MCF 10A (cell line): ENCODE measurements at regions of chr17 and their contacts with region 1.

Region 1: GRCh38 chr17:75855310-75856081 is at the start of gene WBP2:
- DNase-seq: peak; percentile 100
- H3K4me3 Mint-ChIP-seq: no peak within 1 kb of the TSS
- H3K27ac Mint-ChIP-seq: no peak within 1 kb of the TSS
- H3K4me1 Mint-ChIP-seq: peaks cover 19% of the 10 kb centered on the region
- H3K27me3 Mint-ChIP-seq: no peaks in the 10 kb centered on the region
- CTCF ChIP-seq: peak; percentile 14
- total RNA-seq, gene WBP2: 55.7 and 97.9 TPM in 2 replicates

Region 2: DNA sequence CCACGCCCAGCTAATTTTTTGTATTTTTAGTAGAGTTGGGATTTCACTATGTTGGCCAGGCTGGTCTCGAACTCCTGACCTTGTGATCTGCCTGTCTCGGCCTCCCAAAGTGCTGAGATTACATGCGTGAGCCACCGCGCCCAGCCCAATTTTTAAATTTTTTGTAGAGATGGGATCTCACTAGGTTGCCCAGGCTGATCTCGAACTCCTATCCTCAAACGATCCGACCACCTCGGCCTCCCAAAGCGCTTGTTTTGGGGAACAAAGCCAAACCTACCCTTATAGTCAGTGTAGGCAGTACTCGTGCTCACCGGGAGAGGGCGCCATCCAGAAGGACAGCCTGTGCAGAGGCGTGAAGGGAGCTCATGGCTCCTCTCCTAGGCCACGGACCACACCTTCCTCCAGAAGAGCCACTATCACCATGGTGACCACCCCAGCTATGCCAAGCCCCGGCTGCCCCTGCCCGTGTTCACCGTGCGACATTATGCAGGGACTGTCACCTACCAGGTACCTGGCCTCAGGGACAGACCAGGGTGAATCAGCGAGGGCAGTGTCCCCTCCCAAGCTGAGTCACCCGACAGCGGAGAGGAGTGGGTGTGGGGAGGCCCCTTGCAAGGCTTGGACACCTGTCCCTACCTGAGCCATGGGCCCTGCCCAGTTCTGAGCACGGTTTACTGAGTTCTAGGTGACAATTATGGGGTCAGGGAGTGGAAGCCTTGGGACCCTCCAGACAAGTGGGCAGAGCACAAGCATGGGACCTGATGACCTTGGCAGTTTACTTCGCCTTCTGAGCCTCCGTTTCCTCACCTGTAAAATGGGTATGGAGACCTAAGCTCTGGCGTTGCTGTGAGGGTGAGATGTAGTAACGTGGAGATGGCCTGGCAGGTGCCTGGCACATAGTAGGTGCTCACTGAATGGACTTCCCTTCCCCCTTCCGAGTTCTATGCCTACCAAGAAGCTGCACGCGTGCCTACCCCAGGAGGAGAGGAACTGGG is 254.1 kb before region 1 on chr17:
- CTCF ChIA-PET with region 1: no interaction called
- POLR2A ChIA-PET with region 1: no interaction called
- intact Hi-C with region 1: no loop called
- DNase-seq: peak; percentile 70
- H3K4me3 Mint-ChIP-seq: no peak overlapping the region
- H3K27ac Mint-ChIP-seq: no peak overlapping the region
- H3K4me1 Mint-ChIP-seq: peaks cover 18% of the 10 kb centered on the region
- H3K27me3 Mint-ChIP-seq: no peaks in the 10 kb centered on the region
- CTCF ChIP-seq: peak; percentile 79

Region 3: DNA sequence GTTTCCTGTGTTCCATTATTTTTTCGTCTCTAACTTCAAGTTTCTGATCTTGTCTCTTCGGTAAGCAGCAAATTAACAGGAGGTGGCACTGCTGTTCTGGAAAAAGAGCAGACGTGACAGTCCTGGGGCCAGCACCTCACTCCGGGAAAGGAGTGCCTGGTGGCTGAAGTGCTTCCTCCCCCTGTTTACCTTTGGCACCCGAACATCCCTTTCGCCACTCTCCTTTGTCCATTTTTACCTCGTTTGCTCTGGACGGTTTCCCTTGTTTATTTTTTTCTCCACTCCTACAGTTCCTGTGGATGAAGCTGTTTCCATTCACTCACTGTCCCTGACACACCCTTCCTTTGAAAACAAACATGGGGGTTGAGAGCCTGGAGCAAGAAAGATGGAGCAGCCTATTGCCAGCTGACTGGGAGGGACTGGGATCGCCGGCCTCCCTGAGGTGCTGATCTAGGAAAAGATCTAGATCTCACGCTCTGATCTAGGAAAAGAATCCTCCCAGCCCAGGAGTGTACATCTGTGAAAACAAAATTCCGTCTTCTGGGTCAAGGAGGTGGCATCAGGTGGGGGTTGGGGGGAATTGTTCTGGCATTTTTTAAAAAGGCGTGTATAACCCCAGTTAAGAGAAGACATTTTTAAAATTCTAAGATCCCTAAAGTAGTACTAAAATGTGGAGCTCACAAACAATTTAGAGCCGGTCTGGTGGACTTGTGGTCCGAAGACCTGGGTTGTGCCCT is 175.6 kb before region 1 on chr17:
- CTCF ChIA-PET with region 1: interaction called, 4 read pairs
- POLR2A ChIA-PET with region 1: interaction called, 17 read pairs
- intact Hi-C with region 1: no loop called
- DNase-seq: peak; percentile 92
- H3K4me3 Mint-ChIP-seq: peak overlapping the region; percentile 60
- H3K27ac Mint-ChIP-seq: peak overlapping the region; percentile 91
- H3K4me1 Mint-ChIP-seq: peaks cover 40% of the 10 kb centered on the region
- H3K27me3 Mint-ChIP-seq: no peaks in the 10 kb centered on the region
- CTCF ChIP-seq: peak; percentile 60

Region 4: DNA sequence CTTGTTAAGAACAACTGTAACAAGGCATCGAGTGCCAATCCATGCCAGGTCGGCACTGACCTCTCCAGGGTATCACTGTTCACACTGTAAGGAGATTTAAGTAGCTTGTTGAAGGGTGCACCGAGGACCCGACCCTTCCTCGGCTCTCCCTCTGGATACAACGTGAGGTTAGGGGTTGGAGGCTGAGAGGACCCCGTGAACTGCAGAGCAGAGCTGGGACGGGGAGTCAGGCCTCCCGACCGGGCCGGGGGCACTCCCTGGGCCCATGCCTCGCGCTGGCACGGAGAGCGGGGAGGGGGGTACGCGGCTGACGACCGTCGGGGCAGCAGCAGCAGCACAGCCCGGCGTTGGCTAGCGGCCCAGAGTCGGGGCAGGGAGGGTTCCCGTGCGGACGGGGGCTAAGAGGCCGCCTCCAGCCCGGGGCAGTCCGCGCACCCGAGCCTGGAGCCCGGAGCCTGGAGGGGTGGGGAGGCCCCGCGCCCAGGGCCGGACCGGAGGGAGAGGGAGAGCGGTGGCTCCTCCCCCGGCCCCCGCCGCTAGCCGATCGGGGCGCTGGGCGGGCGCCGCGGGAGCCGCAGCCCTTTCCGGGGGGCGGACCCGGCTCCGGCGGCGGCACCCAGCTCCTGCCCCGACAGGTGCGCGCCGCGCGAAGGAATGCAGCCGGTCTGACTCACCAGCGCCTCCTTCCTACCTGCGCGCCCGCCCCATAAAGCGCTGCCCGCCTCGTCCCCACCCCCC is 134.6 kb before region 1 on chr17 and contains the start of gene ITGB4:
- CTCF ChIA-PET with region 1: no interaction called
- POLR2A ChIA-PET with region 1: interaction called, 12 read pairs
- intact Hi-C with region 1: no loop called
- DNase-seq: peak; percentile 85
- H3K4me3 Mint-ChIP-seq: peak within 1 kb of the TSS; percentile 87
- H3K27ac Mint-ChIP-seq: peak within 1 kb of the TSS; percentile 78
- H3K4me1 Mint-ChIP-seq: peaks cover 6% of the 10 kb centered on the region
- H3K27me3 Mint-ChIP-seq: no peaks in the 10 kb centered on the region
- CTCF ChIP-seq: no peak
- total RNA-seq, gene ITGB4: 727 and 1,054 TPM in 2 replicates

Region 5: DNA sequence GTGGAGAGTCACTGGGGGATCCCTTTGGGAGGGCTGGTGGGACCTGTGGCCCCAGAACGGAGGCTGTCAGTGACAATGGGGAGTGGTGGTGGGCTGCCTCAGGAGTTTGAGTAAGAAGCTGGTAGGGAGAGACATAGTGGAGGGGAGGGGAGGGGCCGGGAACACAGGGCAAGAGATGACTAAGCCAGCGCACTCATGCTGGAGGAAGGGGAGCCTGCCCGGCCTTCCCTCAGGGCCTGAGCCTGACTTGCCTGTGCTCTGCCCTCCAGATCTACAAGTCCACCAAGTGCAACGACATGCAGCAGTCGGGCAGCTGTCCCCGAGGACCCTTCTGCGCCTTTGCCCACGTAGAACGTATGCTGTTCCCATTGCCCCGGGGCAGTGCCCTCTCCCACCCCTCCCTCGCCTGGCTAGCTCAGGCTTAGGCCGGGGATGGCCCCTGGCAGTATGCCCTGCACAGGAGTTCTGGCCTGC is 40.6 kb before region 1 on chr17:
- CTCF ChIA-PET with region 1: no interaction called
- POLR2A ChIA-PET with region 1: interaction called, 16 read pairs
- intact Hi-C with region 1: no loop called
- DNase-seq: peak; percentile 81
- H3K4me3 Mint-ChIP-seq: no peak overlapping the region
- H3K27ac Mint-ChIP-seq: peak overlapping the region; percentile 36
- H3K4me1 Mint-ChIP-seq: peaks cover 11% of the 10 kb centered on the region
- H3K27me3 Mint-ChIP-seq: no peaks in the 10 kb centered on the region
- CTCF ChIP-seq: no peak

Region 6: DNA sequence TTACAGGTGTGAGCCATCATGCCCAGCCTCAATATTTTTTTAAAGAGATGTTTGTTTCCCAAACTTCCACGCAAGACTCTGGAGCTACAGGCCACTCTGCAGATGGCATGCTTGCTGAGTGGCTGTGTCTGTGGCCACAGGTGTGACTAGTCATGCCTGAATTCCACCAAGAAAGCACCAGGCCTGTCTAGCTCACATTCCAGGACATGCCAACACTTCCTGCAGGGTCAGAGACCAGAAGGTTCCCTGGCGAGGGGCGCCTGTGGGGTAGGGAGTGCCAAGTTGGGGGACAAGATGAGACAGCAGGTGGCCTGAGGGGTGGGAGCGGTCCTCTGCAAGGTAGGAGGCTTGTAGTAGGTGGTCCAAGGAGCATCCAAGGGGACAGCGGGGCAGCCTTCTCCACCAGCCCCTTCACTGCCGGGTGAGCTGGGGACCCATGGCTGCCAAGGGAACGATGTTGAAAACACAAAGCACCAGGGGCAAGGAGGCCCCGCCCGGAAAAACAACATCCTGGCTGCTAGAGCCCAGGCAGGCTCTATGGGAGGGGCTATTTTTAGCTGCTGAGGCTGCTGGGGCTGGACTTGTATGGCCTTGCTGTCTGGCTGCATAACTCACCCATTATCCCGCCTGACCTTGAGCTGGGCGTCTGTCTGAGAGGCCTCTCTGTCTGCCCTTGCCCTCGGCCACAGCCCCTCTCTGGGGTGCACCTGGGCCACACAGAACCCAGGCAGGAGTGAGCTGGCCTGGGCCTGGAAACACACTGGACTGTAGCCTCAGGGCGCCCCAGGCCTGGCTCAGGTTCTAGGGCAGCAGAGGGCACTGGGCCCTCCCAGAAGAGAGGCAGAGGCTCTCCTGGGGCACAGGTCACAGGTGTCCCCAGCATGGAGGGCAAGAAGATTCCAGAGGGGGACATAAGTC is 17.2 kb after region 1 on chr17:
- CTCF ChIA-PET with region 1: interaction called, 36 read pairs
- POLR2A ChIA-PET with region 1: interaction called, 164 read pairs
- intact Hi-C with region 1: no loop called
- DNase-seq: peak; percentile 78
- H3K4me3 Mint-ChIP-seq: no peak overlapping the region
- H3K27ac Mint-ChIP-seq: peak overlapping the region; percentile 78
- H3K4me1 Mint-ChIP-seq: peaks cover 33% of the 10 kb centered on the region
- H3K27me3 Mint-ChIP-seq: no peaks in the 10 kb centered on the region
- CTCF ChIP-seq: no peak

Region 7: DNA sequence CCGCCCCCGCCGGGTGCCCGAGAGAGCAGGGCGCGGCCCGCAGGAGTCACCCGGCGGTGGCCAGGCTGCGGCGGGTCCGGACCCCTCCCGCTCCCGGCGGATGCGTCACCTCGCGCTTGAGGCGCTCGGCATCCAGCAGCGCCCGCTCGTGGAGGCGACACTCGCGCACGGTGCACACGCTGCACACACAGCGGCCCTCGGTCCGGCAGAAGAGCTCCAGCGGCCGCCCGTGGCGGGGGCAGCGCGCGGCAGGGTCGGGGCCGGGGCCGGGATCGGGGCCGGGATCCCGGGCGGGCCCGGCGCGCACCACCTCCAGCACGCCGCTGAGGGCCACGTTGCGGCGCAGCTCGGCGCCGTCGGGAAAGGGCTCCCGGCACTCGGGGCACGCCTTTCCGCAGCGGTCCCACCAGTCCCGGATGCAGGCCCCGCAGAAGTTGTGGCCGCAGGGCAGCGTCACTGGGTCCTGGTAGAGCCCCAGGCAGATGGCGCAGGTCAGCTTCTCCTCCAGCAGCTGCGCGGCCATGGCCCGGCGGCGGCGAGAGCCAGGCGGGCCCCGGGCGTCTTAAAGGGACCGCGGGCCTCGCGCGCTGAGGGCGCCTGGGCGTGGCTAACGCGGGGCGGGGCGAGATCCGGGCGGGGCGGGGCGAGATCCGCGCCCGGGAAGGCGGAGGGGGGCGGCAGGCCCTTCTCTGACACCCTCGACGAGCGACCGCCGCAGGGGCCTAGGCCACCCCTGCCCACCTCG is 41.1 kb after region 1 on chr17 and contains the start of gene TRIM65:
- CTCF ChIA-PET with region 1: interaction called, 3 read pairs
- POLR2A ChIA-PET with region 1: interaction called, 49 read pairs
- intact Hi-C with region 1: loop called (anchors 2 kb)
- DNase-seq: peak; percentile 71
- H3K4me3 Mint-ChIP-seq: peak within 1 kb of the TSS; percentile 74
- H3K27ac Mint-ChIP-seq: peak within 1 kb of the TSS; percentile 70
- H3K4me1 Mint-ChIP-seq: peaks cover 19% of the 10 kb centered on the region
- H3K27me3 Mint-ChIP-seq: no peaks in the 10 kb centered on the region
- CTCF ChIP-seq: peak; percentile 14
- total RNA-seq, gene TRIM65: 15.9 and 17.4 TPM in 2 replicates

Region 8: GRCh38 chr17:75987007-75987406 is 131.5 kb after region 1 on chr17:
- CTCF ChIA-PET with region 1: no interaction called
- POLR2A ChIA-PET with region 1: no interaction called
- intact Hi-C with region 1: no loop called
- DNase-seq: no peak
- H3K4me3 Mint-ChIP-seq: no peak overlapping the region
- H3K27ac Mint-ChIP-seq: no peak overlapping the region
- H3K4me1 Mint-ChIP-seq: peaks cover 7% of the 10 kb centered on the region
- H3K27me3 Mint-ChIP-seq: no peaks in the 10 kb centered on the region
- CTCF ChIP-seq: no peak

Region 9: GRCh38 chr17:76027159-76027839 is 171.8 kb after region 1 on chr17 and contains the start of gene EVPL:
- CTCF ChIA-PET with region 1: no interaction called
- POLR2A ChIA-PET with region 1: no interaction called
- intact Hi-C with region 1: no loop called
- DNase-seq: peak; percentile 91
- H3K4me3 Mint-ChIP-seq: peak within 1 kb of the TSS; percentile 80
- H3K27ac Mint-ChIP-seq: peak within 1 kb of the TSS; percentile 74
- H3K4me1 Mint-ChIP-seq: peaks cover 6% of the 10 kb centered on the region
- H3K27me3 Mint-ChIP-seq: no peaks in the 10 kb centered on the region
- CTCF ChIP-seq: no peak
- total RNA-seq, gene EVPL: 7.7 and 8.1 TPM in 2 replicates

Region 10: DNA sequence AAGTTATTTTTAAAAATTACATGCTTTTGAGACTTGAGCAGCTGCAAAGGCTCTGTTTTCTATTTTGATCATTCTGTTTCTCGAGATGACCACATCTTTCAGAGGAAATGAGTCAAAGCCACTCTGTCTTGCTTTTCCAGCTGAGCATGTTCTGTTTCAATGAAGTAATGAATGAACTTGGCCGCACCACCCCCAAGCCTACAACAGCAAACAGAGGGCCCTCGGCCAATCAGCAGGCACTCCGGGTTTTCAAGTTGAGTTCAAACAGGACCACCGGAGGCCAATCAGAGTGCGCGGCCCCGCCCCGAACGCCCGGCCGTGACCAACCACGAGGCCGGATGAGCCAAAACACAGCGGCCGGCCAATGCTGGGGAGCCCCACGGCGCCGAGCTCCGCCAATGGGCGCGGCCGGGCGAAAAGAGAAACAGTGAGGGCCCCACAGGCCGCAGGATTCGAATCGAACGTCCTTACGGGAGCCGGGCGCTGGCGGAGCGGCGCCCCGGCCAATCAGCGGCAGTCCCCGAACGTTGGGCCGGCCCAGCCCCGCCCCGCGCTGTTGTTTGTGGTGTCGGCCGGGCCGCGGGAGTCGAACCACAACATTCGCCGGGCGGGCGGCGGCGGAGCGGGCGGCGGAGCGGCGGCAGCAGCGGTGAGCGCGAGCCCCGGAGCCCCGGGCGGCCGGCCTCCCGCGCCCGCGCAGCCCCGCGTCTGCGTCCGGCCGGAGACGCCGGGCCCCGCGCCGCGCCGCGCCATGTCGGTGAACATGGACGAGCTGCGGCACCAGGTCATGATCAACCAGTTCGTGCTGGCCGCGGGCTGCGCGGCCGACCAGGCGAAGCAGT is 409.5 kb after region 1 on chr17 and contains the start of gene UBALD2:
- CTCF ChIA-PET with region 1: no interaction called
- POLR2A ChIA-PET with region 1: interaction called, 12 read pairs
- intact Hi-C with region 1: no loop called
- DNase-seq: peak; percentile 99
- H3K4me3 Mint-ChIP-seq: peak within 1 kb of the TSS; percentile 76
- H3K27ac Mint-ChIP-seq: peak within 1 kb of the TSS; percentile 87
- H3K4me1 Mint-ChIP-seq: peaks cover 7% of the 10 kb centered on the region
- H3K27me3 Mint-ChIP-seq: no peaks in the 10 kb centered on the region
- CTCF ChIP-seq: no peak
- total RNA-seq, gene UBALD2: 84.9 and 109 TPM in 2 replicates